AG04450 (cell line): ENCODE measurements at regions of chr9 and their contacts with region 1.

Region 1: DNA sequence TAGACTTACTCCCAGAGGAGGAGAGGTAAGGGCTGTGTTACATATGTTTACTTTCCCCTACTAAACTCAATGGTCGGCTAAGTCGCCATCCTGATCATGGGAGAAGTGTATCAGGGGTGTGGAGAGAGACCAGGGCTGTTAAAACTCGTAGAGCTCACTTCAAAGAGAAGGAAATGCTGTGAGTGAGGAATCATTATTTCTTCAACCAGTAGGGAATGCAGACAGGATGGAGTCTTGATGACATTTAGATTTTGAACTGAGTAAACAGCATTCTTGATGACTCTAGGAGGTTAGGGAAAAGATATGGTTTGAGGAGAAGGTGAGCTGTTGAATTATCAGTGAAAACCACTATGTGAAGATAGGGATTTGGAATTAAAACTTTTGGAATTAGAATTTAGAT is 17.3 kb downstream of the RECK start:
- DNase-seq: no peak
- H3K4me3 ChIP-seq: no peak overlapping the region
- H3K27ac ChIP-seq: no peak overlapping the region
- H3K27me3 ChIP-seq: no peaks in the 10 kb centered on the region
- CTCF ChIP-seq: no peak

Region 2: GRCh38 chr9:36080519-36080918 is 26.5 kb after region 1 on chr9:
- CTCF ChIA-PET with region 1: interaction called, 11 read pairs
- POLR2A ChIA-PET with region 1: no interaction called
- DNase-seq: no peak
- H3K4me3 ChIP-seq: no peak overlapping the region
- H3K27ac ChIP-seq: no peak overlapping the region
- H3K27me3 ChIP-seq: no peaks in the 10 kb centered on the region
- CTCF ChIP-seq: no peak